Caco-2 (cell line): ENCODE measurements at regions of chr1 and their contacts with region 1.

Region 1: DNA sequence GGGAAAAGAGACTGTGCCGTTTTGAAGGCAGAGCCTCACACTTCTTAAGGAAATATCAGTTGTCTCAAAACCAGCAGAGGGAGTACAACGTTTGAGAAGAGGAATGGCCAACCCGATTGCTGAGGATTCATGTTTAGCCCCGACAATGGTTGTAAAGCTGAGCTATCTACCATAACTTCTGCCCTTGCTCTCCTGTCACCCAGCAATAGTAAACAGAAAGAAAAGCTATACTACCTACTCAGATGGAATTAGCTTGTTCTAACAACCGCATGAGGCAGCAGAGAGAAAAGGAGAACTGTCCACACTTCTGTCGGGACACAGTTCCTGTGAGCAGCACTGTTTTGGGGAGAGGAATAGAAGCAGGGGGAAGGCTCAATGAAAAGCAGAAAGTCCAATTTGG is 91.2 kb downstream of the SLC45A1 start:
- DNase-seq: peak in 1 of 2 experiments; percentile 39
- H3K4me3 ChIP-seq: no peak overlapping the region
- H3K4me3 Mint-ChIP-seq: no peak overlapping the region
- H3K27ac Mint-ChIP-seq: peak overlapping the region; percentile 11
- H3K4me1 ChIP-seq: peaks cover 6% of the 10 kb centered on the region; the same call in 1 of the 2 replicates
- H3K4me1 Mint-ChIP-seq: peaks cover 17% of the 10 kb centered on the region
- H3K27me3 ChIP-seq: no peaks in the 10 kb centered on the region
- H3K27me3 Mint-ChIP-seq: no peaks in the 10 kb centered on the region
- CTCF ChIP-seq: peak; percentile 35 to 44

Region 2: GRCh38 chr1:8217011-8217711 is 191.9 kb before region 1 on chr1:
- CTCF ChIA-PET with region 1: no interaction called
- POLR2A ChIA-PET with region 1: no interaction called
- intact Hi-C with region 1: no loop called
- DNase-seq: no peak
- H3K4me3 ChIP-seq: no peak overlapping the region
- H3K4me3 Mint-ChIP-seq: no peak overlapping the region
- H3K27ac Mint-ChIP-seq: no peak overlapping the region
- H3K4me1 ChIP-seq: peaks cover 8% of the 10 kb centered on the region; the same call in 1 of the 2 replicates
- H3K4me1 Mint-ChIP-seq: peaks cover 10% of the 10 kb centered on the region
- H3K27me3 ChIP-seq: no peaks in the 10 kb centered on the region
- H3K27me3 Mint-ChIP-seq: no peaks in the 10 kb centered on the region
- CTCF ChIP-seq: no peak

Region 3: GRCh38 chr1:8423650-8424538 is 14.8 kb after region 1 on chr1:
- CTCF ChIA-PET with region 1: interaction called, 20 read pairs
- POLR2A ChIA-PET with region 1: interaction called, 4 read pairs
- intact Hi-C with region 1: loop called (anchors 1 kb)
- DNase-seq: peak; percentile 75 to 79
- H3K4me3 ChIP-seq: peak overlapping the region; percentile 80
- H3K4me3 Mint-ChIP-seq: no peak overlapping the region
- H3K27ac Mint-ChIP-seq: peak overlapping the region; percentile 74
- H3K4me1 ChIP-seq: peaks cover 50% of the 10 kb centered on the region
- H3K4me1 Mint-ChIP-seq: peaks cover 30% of the 10 kb centered on the region
- H3K27me3 ChIP-seq: no peaks in the 10 kb centered on the region
- H3K27me3 Mint-ChIP-seq: no peaks in the 10 kb centered on the region
- CTCF ChIP-seq: peak in 1 of 2 experiments; percentile 4

Region 4: GRCh38 chr1:8443558-8444194 is 34.6 kb after region 1 on chr1:
- CTCF ChIA-PET with region 1: interaction called, 7 read pairs
- POLR2A ChIA-PET with region 1: no interaction called
- intact Hi-C with region 1: loop called (anchors 5 kb)
- DNase-seq: peak in 1 of 2 experiments; percentile 40
- H3K4me3 ChIP-seq: no peak overlapping the region
- H3K4me3 Mint-ChIP-seq: no peak overlapping the region
- H3K27ac Mint-ChIP-seq: no peak overlapping the region
- H3K4me1 ChIP-seq: no peaks in the 10 kb centered on the region
- H3K4me1 Mint-ChIP-seq: peaks cover 6% of the 10 kb centered on the region
- H3K27me3 ChIP-seq: no peaks in the 10 kb centered on the region
- H3K27me3 Mint-ChIP-seq: no peaks in the 10 kb centered on the region
- CTCF ChIP-seq: peak in 1 of 2 experiments; percentile 36